ENCODE measurements at regions of chr11 and their contacts with region 1.

Region 1: DNA sequence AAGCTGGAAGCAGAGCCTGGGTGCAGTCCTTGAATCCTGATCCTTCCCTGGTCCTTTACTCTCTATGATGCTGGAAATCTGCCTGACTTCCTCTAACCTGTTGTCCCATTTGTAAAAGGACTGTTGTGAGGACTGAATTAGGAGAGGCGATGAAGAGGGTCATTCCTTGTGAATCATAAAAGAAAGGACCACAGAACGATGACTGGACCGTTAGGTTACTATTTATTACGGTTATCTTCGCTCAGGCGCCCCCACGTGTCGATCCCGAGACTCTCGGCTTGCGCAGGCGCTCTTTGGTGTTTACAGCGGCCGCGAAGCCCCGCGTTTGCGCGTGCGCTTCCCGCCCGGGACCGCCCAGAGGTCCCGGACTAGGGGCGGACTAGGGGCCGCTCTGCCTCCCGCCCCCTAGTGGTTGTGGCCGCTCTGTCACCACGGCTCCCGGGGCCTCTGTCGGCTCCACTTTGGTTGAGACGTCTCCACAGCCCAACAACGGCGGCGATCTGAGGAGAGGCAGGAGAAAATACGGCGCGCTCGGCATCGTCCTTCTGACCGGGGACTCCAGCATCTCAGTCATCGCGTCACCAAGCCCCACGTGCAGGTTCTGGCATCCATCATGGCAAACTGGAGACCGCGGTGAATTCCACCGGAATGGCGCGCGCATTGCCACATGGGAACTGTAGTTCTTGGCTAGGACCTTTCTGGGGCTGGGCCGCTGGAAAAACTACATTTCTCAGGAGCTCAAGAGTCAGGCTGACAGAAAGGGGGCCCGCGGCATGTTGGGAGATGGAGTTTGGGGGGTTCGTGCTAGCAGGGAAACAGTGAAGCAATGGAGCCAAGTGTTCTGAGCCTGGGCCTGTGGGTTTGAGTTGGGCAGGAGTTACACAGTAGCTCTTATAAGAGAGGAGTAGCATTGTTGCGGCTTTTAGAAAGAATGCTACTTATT is at the start of gene STARD10:
- DNase-seq: peak; percentile 83 to 93
- H3K4me3 ChIP-seq: peak within 1 kb of the TSS; percentile 46 to 93 (median 88)
- H3K27ac ChIP-seq: peak within 1 kb of the TSS; percentile 74; the same call in 1 of the 2 replicates
- H3K4me1 ChIP-seq: peaks cover 0 to 13% (median 7%) of the 10 kb centered on the region in 4 experiments; a peak in 4 of 7 replicates
- H3K27me3 ChIP-seq: no peaks in the 10 kb centered on the region
- CTCF ChIP-seq: peak; percentile 66 to 84 (median 76)
- EP300 ChIP-seq: no peak
- POLR2A ChIP-seq: peak in 1 of 2 experiments; percentile 60; a peak in 2 of 3 replicates
- RAD21 ChIP-seq: peak; percentile 51 to 60; a peak in 3 of 4 replicates
- total RNA-seq, gene STARD10: 23.7 and 25.3 TPM in 2 replicates

Region 2: DNA sequence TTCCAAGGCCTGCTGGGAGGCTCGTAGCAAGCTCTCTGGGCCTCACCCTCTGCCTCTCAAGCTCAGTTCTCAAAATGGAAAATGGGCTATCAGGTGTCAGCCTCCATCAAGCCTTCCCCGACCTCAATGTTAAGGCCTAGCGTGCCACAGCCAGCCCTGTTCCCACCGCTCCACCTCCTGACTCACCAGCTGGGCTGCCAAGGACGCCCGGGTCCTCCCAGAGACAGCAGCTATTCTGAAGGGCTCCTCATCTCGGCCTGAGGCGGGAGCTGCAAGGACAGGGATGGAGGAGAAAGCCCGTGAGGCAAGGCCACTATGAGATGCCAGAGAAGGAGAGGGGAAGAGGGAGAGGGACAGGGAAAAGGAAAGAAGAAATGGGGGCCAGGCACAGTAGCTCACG is 61.4 kb before region 1 on chr11:
- CTCF ChIA-PET with region 1: interaction called, 105 read pairs
- POLR2A ChIA-PET with region 1: no interaction called
- DNase-seq: no peak
- H3K4me3 ChIP-seq: no peak overlapping the region
- H3K27ac ChIP-seq: no peak overlapping the region
- H3K4me1 ChIP-seq: peaks cover 0 to 12% (median 7%) of the 10 kb centered on the region in 4 experiments; a peak in 5 of 7 replicates
- H3K27me3 ChIP-seq: no peaks in the 10 kb centered on the region
- CTCF ChIP-seq: no peak
- EP300 ChIP-seq: no peak
- POLR2A ChIP-seq: no peak
- RAD21 ChIP-seq: no peak

Region 3: GRCh38 chr11:72762641-72763304 is 30.9 kb before region 1 on chr11:
- CTCF ChIA-PET with region 1: interaction called, 21 read pairs
- POLR2A ChIA-PET with region 1: interaction called, 3 read pairs
- DNase-seq: no peak
- H3K4me3 ChIP-seq: no peak overlapping the region
- H3K27ac ChIP-seq: no peak overlapping the region
- H3K4me1 ChIP-seq: peaks cover 0 to 14% (median 8%) of the 10 kb centered on the region in 4 experiments; a peak in 6 of 7 replicates
- H3K27me3 ChIP-seq: no peaks in the 10 kb centered on the region
- CTCF ChIP-seq: no peak
- EP300 ChIP-seq: no peak
- POLR2A ChIP-seq: no peak
- RAD21 ChIP-seq: no peak

Region 4: GRCh38 chr11:72772978-72773690 is 20.6 kb before region 1 on chr11:
- CTCF ChIA-PET with region 1: interaction called, 50 read pairs
- POLR2A ChIA-PET with region 1: interaction called, 5 read pairs
- DNase-seq: no peak
- H3K4me3 ChIP-seq: no peak overlapping the region
- H3K27ac ChIP-seq: no peak overlapping the region
- H3K4me1 ChIP-seq: peaks cover 0 to 8% (median 7%) of the 10 kb centered on the region in 4 experiments; a peak in 4 of 7 replicates
- H3K27me3 ChIP-seq: no peaks in the 10 kb centered on the region
- CTCF ChIP-seq: no peak
- EP300 ChIP-seq: no peak
- POLR2A ChIP-seq: no peak
- RAD21 ChIP-seq: no peak

Region 5: DNA sequence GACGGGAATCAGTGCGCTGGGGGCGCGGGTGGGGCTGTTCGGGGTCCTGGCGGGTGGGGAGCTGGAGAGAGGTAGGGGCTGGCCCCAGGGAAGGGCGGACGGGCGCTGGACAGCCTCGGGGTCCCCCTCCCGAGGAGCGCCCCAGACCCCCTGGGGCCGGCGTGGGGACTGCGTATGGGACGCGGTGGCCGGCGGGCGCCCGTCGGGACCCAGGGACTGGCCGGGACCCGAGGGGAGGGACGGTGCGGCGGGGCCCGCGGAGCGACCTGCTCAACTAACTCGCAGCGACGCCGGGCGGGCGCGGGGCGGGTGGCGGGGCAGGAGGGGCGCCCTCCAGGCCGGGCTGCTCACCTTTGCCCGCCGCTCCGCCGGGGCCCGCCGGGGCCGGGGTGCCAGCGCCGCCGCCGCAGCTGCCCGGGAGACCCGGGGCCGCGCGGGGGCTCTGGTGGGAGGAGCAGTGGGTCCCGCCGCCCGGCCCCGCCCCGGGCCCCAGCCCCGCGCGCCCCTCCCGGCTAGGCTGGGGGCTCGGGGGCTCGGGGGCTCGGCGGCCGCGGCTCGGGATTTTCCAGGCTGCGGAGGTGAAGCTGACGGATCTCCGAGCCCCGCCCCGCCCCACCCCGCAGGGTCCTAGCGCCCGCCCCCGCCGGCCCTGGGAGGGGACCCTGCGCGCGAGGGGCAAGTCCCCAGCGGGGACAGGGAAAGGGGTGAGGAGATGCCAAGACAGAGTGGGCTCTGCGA is 12.2 kb before region 1 on chr11:
- CTCF ChIA-PET with region 1: interaction called, 50 read pairs
- POLR2A ChIA-PET with region 1: interaction called, 8 read pairs
- DNase-seq: peak in 1 of 2 experiments; percentile 63
- H3K4me3 ChIP-seq: peak overlapping the region; percentile 42 to 76 (median 57)
- H3K27ac ChIP-seq: no peak overlapping the region
- H3K4me1 ChIP-seq: peaks cover 5 to 19% (median 13%) of the 10 kb centered on the region in 4 experiments
- H3K27me3 ChIP-seq: peaks cover 0 to 12% (median 6%) of the 10 kb centered on the region in 4 experiments; a peak in 3 of 7 replicates
- CTCF ChIP-seq: no peak
- EP300 ChIP-seq: no peak
- POLR2A ChIP-seq: no peak
- RAD21 ChIP-seq: no peak

Region 6: GRCh38 chr11:72814286-72815109 is 20.8 kb after region 1 on chr11 and contains the start of gene ATG16L2:
- CTCF ChIA-PET with region 1: interaction called, 51 read pairs
- POLR2A ChIA-PET with region 1: interaction called, 6 read pairs
- DNase-seq: peak; percentile 50 to 93
- H3K4me3 ChIP-seq: peak within 1 kb of the TSS; percentile 58 to 84 (median 79)
- H3K27ac ChIP-seq: peak within 1 kb of the TSS; percentile 93
- H3K4me1 ChIP-seq: peaks cover 0 to 15% (median 9%) of the 10 kb centered on the region in 4 experiments; a peak in 5 of 7 replicates
- H3K27me3 ChIP-seq: peaks cover 0 to 7% (median 4%) of the 10 kb centered on the region in 4 experiments; a peak in 4 of 7 replicates
- CTCF ChIP-seq: peak in 1 of 3 experiments; percentile 17; a peak in 2 of 4 replicates
- EP300 ChIP-seq: no peak
- POLR2A ChIP-seq: peak in 1 of 2 experiments; percentile 91; a peak in 2 of 3 replicates
- RAD21 ChIP-seq: peak; percentile 1 to 37; a peak in 1 of 4 replicates
- total RNA-seq, gene ATG16L2: 11.0 and 11.7 TPM in 2 replicates

Region 7: GRCh38 chr11:72821883-72822799 is 28.4 kb after region 1 on chr11:
- CTCF ChIA-PET with region 1: interaction called, 12 read pairs
- POLR2A ChIA-PET with region 1: interaction called, 5 read pairs
- DNase-seq: peak; percentile 84 to 99
- H3K4me3 ChIP-seq: peak overlapping the region; percentile 50 to 73 (median 60)
- H3K27ac ChIP-seq: no peak overlapping the region
- H3K4me1 ChIP-seq: peaks cover 0 to 16% (median 11%) of the 10 kb centered on the region in 4 experiments; a peak in 5 of 7 replicates
- H3K27me3 ChIP-seq: peaks cover 0 to 18% (median 13%) of the 10 kb centered on the region in 4 experiments; a peak in 6 of 7 replicates
- CTCF ChIP-seq: peak in 1 of 3 experiments; percentile 1; a peak in 1 of 4 replicates
- EP300 ChIP-seq: no peak
- POLR2A ChIP-seq: peak in 1 of 2 experiments; percentile 42; a peak in 1 of 3 replicates
- RAD21 ChIP-seq: 0 out of 4 replicates have a peak, but pooled peaks of 1 of the 2 experiments have one; percentile 1

Measured in H1 (cell line).